Psoas muscle (tissue), 8 donors: ENCODE measurements at regions of chr9 and their contacts with region 1.

Region 1: DNA sequence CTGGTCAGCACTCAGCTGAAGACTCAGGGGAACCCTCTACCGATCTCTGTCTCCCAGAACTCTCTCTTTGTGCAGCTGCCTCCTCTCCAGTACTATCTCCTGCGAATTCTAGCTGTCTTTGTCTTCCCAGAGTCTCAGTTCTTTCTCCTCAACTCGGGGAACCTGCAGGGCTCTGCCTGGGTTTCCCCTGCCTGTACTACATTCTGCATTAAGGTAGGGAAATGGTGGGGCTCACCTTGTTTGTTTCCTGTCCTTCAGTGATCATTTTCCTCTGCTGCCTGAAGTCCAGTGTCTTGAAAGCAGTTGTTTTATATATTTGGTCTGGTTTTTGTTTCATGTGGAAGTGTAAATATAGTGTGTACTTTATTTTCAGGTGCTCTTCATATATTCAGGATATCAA is 43.1 kb upstream of the IGFBPL1 start:
- DNase-seq: no peak
- ATAC-seq: no peak
- H3K4me3 ChIP-seq: no peak overlapping the region
- H3K27ac ChIP-seq: no peak overlapping the region
- H3K4me1 ChIP-seq: no peaks in the 10 kb centered on the region
- H3K27me3 ChIP-seq: peaks cover 0 to 10% (median 1%) of the 10 kb centered on the region in 3 donors
- CTCF ChIP-seq: no peak

Region 2: DNA sequence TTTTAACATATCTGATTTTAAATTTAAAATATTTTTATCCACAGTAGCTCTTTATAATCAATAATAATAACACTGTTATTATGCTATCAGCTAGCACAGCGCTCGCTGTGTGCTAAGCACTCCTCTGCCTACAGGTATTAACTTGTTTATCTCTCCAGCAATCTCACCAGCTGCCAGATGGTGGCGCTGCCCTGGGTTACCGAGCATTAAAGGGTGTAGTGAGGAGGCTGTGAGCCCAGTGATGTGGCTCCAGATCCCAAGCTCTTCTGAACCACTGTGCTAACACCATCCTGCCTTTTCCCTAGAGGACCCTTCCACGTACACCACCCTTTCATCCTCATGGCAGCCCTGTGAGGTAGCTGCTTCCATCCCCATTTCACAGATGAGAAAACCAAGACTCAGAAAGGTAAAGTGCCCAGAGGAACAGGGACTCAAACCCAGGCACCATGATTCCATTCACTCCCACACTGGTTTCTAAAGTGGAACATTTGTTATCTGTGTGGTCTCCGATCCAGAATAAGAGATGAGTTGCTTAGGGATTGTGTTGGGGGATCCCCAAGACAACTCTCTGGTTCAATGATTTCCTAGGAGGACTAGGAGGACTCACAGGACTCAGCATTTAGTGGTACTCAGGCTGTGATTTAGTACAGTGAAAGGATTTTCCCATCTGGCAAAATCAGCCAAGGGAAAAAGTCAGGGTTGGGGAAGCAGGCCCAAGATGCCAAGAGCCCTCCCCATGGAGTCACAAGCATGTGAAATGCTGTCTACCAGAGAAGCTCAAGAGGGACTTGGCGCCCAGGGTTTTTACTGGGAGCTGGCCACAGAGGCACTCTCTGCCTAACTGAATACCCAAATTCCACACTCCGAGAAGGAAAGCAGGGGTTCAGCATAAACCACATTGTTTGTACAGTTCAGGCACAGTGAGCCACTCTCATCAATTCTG is 50.1 kb before region 1 on chr9:
- intact Hi-C with region 1: loop called in 1 of 2 experiments (anchors 10 kb)
- DNase-seq: no peak
- ATAC-seq: no peak
- H3K4me3 ChIP-seq: no peak overlapping the region
- H3K27ac ChIP-seq: no peak overlapping the region
- H3K4me1 ChIP-seq: no peaks in the 10 kb centered on the region
- H3K27me3 ChIP-seq: peaks cover 0 to 10% (median 0%) of the 10 kb centered on the region in 3 donors
- CTCF ChIP-seq: peak; percentile 25